Activated CD4-positive, alpha-beta T cell treated with anti-CD3 and anti-CD28 coated beads, Interleukin-2, amount 10 ng/mL, durations not matched to agents 24 days and 14 days (primary cell): ENCODE measurements at regions of chr19 and their contacts with region 1.

Region 1: GRCh38 chr19:14136509-14137281 is at the start of gene ASF1B:
- DNase-seq: peak; percentile 99
- H3K4me3 Mint-ChIP-seq: peak within 1 kb of the TSS; percentile 83
- H3K27ac Mint-ChIP-seq: peak within 1 kb of the TSS; percentile 96
- H3K4me1 Mint-ChIP-seq: peaks cover 38% of the 10 kb centered on the region
- H3K27me3 Mint-ChIP-seq: no peaks in the 10 kb centered on the region
- total RNA-seq, gene ASF1B: 85.8 and 90.2 TPM in 2 replicates

Region 2: GRCh38 chr19:13794757-13795589 is 341.7 kb before region 1 on chr19 and contains the start of gene ZSWIM4:
- intact Hi-C with region 1: loop called (anchors 1 kb)
- DNase-seq: peak; percentile 99
- H3K4me3 Mint-ChIP-seq: peak within 1 kb of the TSS; percentile 98
- H3K27ac Mint-ChIP-seq: peak within 1 kb of the TSS; percentile 94
- H3K4me1 Mint-ChIP-seq: peaks cover 31% of the 10 kb centered on the region
- H3K27me3 Mint-ChIP-seq: no peaks in the 10 kb centered on the region
- total RNA-seq, gene ZSWIM4: 7.3 and 7.5 TPM in 2 replicates

Region 3: DNA sequence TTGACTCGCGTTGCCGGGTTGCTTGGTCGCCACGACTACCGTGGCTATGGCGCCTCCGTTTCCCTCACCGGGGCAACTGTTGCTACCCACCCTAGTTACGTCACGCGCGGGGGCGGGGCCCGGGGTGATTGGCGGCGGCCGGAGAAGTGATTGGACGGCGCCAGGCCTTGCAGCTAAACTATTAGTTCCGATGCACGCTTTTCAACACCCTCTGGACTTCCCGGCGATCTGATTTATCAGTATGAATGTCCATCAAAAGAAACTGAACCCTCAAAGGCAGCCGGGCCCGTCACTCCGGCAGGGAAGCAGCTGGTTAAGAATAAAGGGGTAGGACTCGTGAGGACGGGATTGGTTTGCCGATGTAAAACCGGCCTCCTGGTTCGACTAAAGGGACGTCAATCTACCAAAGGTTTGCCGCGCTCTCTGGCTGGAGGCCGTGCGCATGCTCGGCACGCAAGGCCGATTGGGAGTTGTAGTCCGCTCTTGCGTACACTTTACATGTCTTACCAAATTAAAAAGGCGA is 130.4 kb before region 1 on chr19 and contains the start of gene RFX1:
- intact Hi-C with region 1: loop called (anchors 1 kb)
- DNase-seq: peak; percentile 100
- H3K4me3 Mint-ChIP-seq: peak within 1 kb of the TSS; percentile 96
- H3K27ac Mint-ChIP-seq: peak within 1 kb of the TSS; percentile 100
- H3K4me1 Mint-ChIP-seq: peaks cover 39% of the 10 kb centered on the region
- H3K27me3 Mint-ChIP-seq: no peaks in the 10 kb centered on the region
- total RNA-seq, gene RFX1: 17.0 and 18.0 TPM in 2 replicates

Region 4: DNA sequence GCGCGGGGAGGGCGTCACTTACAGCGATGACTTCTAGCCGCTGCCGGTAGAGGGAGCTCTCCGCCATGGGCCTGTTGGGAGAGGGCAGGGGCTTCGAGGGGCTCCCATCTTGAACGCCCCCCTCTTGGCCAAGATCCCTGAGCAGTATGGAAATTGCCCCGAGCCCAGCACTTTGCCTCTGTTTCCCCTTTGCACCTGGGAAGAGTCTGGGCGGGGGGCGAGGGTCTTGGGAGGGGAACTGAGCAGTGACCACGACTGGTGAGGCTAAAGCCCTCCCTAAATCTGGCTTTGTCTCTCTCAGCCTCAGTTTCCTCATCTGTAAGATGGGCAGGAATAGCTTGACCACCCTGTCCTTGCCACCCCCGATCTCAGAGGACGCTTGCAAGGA is 77.6 kb before region 1 on chr19:
- intact Hi-C with region 1: no loop called
- DNase-seq: peak; percentile 87
- H3K4me3 Mint-ChIP-seq: peak overlapping the region; percentile 80
- H3K27ac Mint-ChIP-seq: no peak overlapping the region
- H3K4me1 Mint-ChIP-seq: peaks cover 27% of the 10 kb centered on the region
- H3K27me3 Mint-ChIP-seq: peaks cover 40% of the 10 kb centered on the region

Region 5: DNA sequence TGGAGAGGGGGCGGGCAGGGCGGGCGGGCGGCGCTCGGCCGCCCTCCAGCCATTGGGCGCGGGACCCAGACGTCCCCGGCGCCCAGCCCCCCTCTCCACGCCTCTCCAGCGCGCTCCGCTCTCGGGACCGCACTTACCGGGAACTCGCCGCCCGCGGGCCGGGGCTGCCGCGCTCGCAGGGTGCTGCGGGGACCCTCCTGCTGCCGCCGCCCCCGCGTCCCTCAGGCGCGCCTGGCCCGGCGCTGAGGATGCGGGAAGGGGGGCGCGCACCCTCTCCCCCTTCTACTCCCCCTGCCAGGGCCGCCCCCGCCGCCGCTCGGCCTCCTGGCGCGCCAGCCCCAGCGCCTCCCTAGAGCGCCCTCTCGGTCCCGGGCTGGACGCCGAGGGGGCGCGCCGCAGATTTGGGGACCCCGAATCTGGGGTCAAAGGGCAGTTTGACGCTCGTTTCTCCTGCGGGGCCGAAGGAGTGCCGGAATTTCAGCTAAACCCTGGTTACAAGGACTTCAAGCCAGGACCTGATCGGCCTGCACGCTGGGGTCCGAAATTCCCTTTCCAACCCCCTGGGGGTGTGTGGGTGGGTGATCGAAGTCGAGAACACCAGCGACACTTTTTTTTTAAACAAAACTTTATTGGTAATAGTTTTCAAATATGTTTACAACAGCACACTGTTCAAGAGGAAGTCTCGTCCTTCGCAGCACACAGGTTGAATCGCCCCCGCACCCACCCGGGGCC is 45.4 kb before region 1 on chr19:
- intact Hi-C with region 1: loop called (anchors 2 kb)
- DNase-seq: peak; percentile 94
- H3K4me3 Mint-ChIP-seq: peak overlapping the region; percentile 92
- H3K27ac Mint-ChIP-seq: peak overlapping the region; percentile 98
- H3K4me1 Mint-ChIP-seq: peaks cover 17% of the 10 kb centered on the region
- H3K27me3 Mint-ChIP-seq: no peaks in the 10 kb centered on the region

Region 6: GRCh38 chr19:14347999-14348889 is 211.5 kb after region 1 on chr19:
- intact Hi-C with region 1: loop called (anchors 2 kb)
- DNase-seq: peak; percentile 91
- H3K4me3 Mint-ChIP-seq: peak overlapping the region; percentile 74
- H3K27ac Mint-ChIP-seq: peak overlapping the region; percentile 72
- H3K4me1 Mint-ChIP-seq: peaks cover 17% of the 10 kb centered on the region
- H3K27me3 Mint-ChIP-seq: no peaks in the 10 kb centered on the region

Region 7: GRCh38 chr19:14419106-14419813 is 282.6 kb after region 1 on chr19 and contains the start of gene DDX39A:
- intact Hi-C with region 1: loop called (anchors 1 kb)
- DNase-seq: peak; percentile 99
- H3K4me3 Mint-ChIP-seq: peak within 1 kb of the TSS; percentile 97
- H3K27ac Mint-ChIP-seq: peak within 1 kb of the TSS; percentile 99
- H3K4me1 Mint-ChIP-seq: peaks cover 28% of the 10 kb centered on the region
- H3K27me3 Mint-ChIP-seq: peaks cover 3% of the 10 kb centered on the region
- total RNA-seq, gene DDX39A: 274 and 280 TPM in 2 replicates